CD4-positive, alpha-beta T cell (primary cell): ENCODE measurements at regions of chr21 and their contacts with region 1.

Region 1: DNA sequence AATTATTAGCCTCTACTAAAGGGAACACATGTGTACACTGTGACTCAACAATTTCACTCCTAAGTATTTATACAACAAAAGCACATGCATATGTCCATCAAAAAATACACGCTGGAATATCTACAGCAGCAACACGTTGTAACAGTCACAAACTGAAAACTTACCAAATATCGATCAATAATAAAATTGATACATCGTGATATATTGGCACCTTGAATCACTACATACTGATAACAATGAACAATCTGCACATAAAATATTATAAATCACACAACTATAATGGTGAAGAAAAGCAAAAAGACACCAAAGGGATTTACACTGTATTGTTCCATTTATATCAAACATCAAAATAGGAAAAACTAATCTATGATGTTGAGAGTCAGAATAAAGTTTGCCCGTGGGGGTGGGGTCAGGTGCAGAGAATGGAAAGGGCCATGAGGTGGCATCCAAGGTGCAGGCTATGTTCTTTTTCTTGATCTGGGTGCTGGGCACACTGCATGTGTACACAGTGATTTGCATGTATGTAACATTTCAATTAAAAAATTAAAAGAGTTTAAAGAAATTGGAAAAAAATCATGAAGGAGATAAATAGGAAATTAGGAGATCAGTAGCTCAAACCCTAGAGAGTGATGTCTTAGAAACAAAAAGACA is 127.4 kb downstream of the DSCAM start:
- DNase-seq: no peak
- ATAC-seq: no peak
- H3K4me3 ChIP-seq: no peak overlapping the region
- H3K4me3 Mint-ChIP-seq: no peak overlapping the region
- H3K27ac ChIP-seq: no peak overlapping the region
- H3K27ac Mint-ChIP-seq: no peak overlapping the region
- H3K4me1 ChIP-seq: no peaks in the 10 kb centered on the region
- H3K4me1 Mint-ChIP-seq: no peaks in the 10 kb centered on the region
- H3K27me3 ChIP-seq: no peaks in the 10 kb centered on the region
- H3K27me3 Mint-ChIP-seq: peaks cover 4% of the 10 kb centered on the region
- CTCF ChIP-seq: no peak

Region 2: DNA sequence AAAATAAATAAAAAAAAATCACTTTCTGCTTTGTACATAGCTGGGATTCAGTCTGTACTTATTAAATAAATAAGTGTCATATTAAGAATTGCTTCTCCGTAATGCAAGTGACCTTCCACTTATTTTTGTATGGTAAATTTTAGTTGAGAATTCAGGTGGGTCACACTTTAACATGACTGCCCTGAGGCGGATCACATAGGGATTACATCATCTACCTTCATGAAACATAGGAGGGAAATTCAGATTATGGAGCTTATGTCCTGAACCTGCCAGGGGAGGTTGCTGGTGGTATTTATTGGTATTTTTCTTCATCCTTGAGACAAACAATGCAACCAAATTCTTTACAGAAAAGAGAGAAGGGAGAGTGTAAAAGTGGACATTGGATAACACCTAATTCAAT is 63.2 kb after region 1 on chr21:
- CTCF ChIA-PET with region 1: no interaction called
- POLR2A ChIA-PET with region 1: no interaction called
- intact Hi-C with region 1: loop called in 1 of 2 experiments (anchors 10 kb)
- DNase-seq: no peak
- ATAC-seq: no peak
- H3K4me3 ChIP-seq: no peak overlapping the region
- H3K4me3 Mint-ChIP-seq: no peak overlapping the region
- H3K27ac ChIP-seq: no peak overlapping the region
- H3K27ac Mint-ChIP-seq: no peak overlapping the region
- H3K4me1 ChIP-seq: no peaks in the 10 kb centered on the region
- H3K4me1 Mint-ChIP-seq: no peaks in the 10 kb centered on the region
- H3K27me3 ChIP-seq: no peaks in the 10 kb centered on the region
- H3K27me3 Mint-ChIP-seq: no peaks in the 10 kb centered on the region
- CTCF ChIP-seq: no peak